ENCODE measurements at regions of chr1 and their contacts with region 1.

Region 1: DNA sequence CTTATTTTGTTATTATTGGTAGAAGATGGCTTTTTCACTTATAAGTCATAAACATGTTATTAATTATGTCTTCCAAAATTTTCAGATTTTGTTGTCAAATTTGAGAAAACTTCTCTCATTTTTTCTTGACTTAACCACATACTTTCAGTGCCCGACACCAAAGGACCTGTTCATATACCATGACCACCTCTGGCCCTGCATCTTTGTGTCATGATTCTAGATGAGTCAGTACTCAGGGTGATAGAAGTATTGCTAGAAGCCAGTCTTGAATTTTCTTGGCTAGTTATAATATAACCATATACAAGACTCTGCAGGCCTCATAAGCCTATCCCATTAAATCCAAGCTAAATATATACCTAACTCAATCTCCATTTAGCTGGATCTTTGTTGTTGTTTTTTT is 35.4 kb upstream of the DPH5 start:
- DNase-seq: no peak
- ATAC-seq: peak; percentile 68
- H3K4me3 Mint-ChIP-seq: no peak overlapping the region
- H3K27ac Mint-ChIP-seq: peak overlapping the region; percentile 72
- H3K4me1 Mint-ChIP-seq: peaks cover 61% of the 10 kb centered on the region
- H3K27me3 Mint-ChIP-seq: no peaks in the 10 kb centered on the region
- CTCF ChIP-seq: no peak

Region 2: DNA sequence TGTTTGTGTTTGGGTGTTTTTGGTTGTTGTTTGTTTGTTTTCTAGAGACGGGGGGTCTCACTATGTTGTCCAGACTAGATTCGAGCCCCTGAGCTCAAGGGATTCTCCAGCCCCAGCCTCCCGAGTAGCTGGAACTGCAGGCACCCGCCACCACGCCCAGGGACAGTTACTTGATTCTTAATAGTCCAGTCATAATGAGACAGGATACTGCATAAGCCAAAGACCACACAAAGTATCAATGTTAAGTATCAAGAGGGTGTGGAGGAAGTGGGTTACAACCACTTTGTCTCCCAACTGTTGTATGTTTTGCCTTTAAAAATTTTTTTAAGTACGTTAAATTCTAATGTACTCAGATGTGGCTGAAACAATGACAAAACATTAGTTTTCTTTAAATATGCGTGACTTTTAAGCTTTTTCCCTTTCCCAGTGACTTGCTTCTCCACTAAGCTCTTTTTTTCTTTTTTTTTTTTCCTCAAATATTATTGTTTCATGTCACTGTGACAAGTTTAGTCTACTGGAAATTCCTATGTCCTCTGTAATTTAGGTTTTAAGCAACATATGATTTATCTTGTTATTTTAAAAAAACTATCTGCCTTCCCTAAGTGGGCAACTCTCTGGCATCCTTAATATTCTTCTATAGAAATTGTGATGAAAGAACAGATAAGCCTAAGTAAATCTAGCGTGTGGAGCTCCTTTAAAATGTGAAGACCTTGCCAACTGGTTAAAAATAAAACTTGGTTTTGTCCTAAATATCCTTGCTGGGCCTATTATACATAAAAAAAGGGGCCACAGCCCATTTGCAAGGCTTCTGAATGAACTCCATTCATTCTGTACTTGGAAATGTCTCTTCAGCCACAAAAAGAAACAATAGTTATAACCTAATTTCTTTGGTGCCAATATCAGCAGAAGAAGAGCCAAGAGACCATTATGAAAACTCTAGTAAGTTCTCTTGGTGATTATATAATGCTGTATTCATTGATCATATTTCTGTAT is 20.8 kb after region 1 on chr1:
- CTCF ChIA-PET with region 1: no interaction called
- POLR2A ChIA-PET with region 1: interaction called, 3 read pairs
- intact Hi-C with region 1: loop called (anchors 2 kb)
- DNase-seq: no peak
- ATAC-seq: peak; percentile 52
- H3K4me3 Mint-ChIP-seq: no peak overlapping the region
- H3K27ac Mint-ChIP-seq: peak overlapping the region; percentile 19
- H3K4me1 Mint-ChIP-seq: peaks cover 38% of the 10 kb centered on the region
- H3K27me3 Mint-ChIP-seq: no peaks in the 10 kb centered on the region
- CTCF ChIP-seq: no peak

Region 3: DNA sequence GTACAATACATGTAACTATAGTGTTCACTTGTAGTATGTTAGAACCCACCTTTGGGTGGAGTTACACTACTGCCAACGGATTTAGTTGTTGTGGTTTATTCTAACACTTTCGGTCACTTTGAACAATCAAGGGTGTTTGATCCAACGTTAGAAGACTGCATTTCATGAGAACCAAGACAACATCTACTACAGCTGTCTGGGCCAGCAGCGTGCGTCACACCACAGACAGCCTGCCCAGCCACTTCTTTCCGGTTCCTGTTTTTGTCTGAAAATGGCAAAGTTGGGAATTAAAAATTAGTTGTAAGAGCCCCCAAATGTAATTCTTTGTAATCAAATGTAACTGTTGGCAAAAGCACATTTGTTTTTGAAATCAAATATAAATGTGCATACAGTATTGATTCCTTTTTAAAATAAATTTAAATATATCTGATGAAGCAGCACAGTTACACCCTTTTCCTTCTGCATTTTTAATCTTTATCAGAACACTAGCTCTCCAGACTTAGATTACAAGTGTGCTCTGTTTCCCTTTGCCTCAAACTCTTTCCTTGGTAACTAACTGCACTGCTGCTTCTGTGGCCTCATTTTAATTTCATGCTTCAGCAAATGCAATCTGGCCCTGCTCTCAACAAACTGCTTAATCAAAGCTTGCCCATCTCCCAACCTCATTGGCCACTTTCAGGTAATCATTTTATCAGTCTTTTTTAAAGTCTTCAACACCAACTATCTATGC is 51.2 kb after region 1 on chr1:
- CTCF ChIA-PET with region 1: no interaction called
- POLR2A ChIA-PET with region 1: no interaction called
- intact Hi-C with region 1: loop called (anchors 5 kb)
- DNase-seq: peak; percentile 32
- ATAC-seq: peak; percentile 96
- H3K4me3 Mint-ChIP-seq: peak overlapping the region; percentile 57
- H3K27ac Mint-ChIP-seq: peak overlapping the region; percentile 93
- H3K4me1 Mint-ChIP-seq: peaks cover 40% of the 10 kb centered on the region
- H3K27me3 Mint-ChIP-seq: no peaks in the 10 kb centered on the region
- CTCF ChIP-seq: no peak

Measured in activated B cell treated with CpG ODN at 0.5 μM for 24 hours (primary cell).